Activated CD4-positive, alpha-beta memory T cell treated with anti-CD3 and anti-CD28 coated beads, Interleukin-2, amount 10 ng/mL, durations not matched to agents 7 days and 5 days (primary cell): ENCODE measurements at regions of chr6 and their contacts with region 1.

Region 1: GRCh38 chr6:2353412-2354137 is 108.2 kb upstream of the GMDS start:
- DNase-seq: peak; percentile 62
- H3K4me3 Mint-ChIP-seq: no peak overlapping the region
- H3K27ac Mint-ChIP-seq: no peak overlapping the region
- H3K4me1 Mint-ChIP-seq: no peaks in the 10 kb centered on the region
- H3K27me3 Mint-ChIP-seq: peaks cover 2% of the 10 kb centered on the region

Region 2: GRCh38 chr6:1596088-1596852 is 757.3 kb before region 1 on chr6:
- CTCF ChIA-PET with region 1: interaction called, 13 read pairs
- POLR2A ChIA-PET with region 1: no interaction called
- DNase-seq: peak; percentile 66
- H3K4me3 Mint-ChIP-seq: no peak overlapping the region
- H3K27ac Mint-ChIP-seq: no peak overlapping the region
- H3K4me1 Mint-ChIP-seq: peaks cover 3% of the 10 kb centered on the region
- H3K27me3 Mint-ChIP-seq: peaks cover 62% of the 10 kb centered on the region

Region 3: GRCh38 chr6:2209226-2209809 is 144.3 kb before region 1 on chr6:
- CTCF ChIA-PET with region 1: interaction called, 19 read pairs
- POLR2A ChIA-PET with region 1: interaction called, 3 read pairs
- DNase-seq: peak; percentile 50
- H3K4me3 Mint-ChIP-seq: no peak overlapping the region
- H3K27ac Mint-ChIP-seq: no peak overlapping the region
- H3K4me1 Mint-ChIP-seq: no peaks in the 10 kb centered on the region
- H3K27me3 Mint-ChIP-seq: no peaks in the 10 kb centered on the region

Region 4: DNA sequence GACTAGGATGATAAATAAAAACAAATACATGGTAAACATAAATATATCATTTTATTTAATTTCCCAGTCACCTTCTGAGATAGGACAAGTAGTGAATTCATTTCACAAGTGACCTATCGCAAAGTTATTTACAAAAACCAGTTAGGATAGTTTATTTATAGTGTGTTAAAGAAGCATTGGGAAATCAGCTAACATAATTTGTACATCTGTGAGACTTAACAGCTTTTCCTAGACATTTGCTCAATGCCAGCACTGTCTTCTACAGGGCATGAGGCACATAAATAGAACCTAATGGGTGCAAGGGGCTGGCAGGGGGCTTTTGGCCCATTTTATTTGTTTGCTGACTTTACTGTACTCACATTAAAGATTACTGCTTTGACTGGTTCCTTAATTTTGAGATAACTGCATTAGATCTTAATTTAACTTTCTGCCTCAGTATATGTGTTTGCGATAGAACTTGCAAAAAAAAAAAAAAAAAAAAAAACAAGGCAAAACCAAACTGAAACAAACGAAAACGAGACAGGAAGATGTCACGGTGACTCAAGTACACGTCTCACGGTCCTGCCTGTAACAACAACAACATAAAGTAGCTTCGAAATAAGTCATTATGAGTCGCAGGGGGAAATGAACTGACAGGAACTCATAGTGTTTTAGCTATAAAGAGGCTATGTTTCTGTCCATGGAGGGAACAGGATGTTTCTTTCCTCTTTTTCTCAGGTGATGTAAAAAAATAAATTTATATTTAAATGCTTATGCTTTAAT is 25.5 kb after region 1 on chr6:
- CTCF ChIA-PET with region 1: no interaction called
- POLR2A ChIA-PET with region 1: no interaction called
- DNase-seq: no peak
- H3K4me3 Mint-ChIP-seq: no peak overlapping the region
- H3K27ac Mint-ChIP-seq: peak overlapping the region; percentile 30
- H3K4me1 Mint-ChIP-seq: peaks cover 7% of the 10 kb centered on the region
- H3K27me3 Mint-ChIP-seq: no peaks in the 10 kb centered on the region